ENCODE measurements at regions of chr14 and their contacts with region 1.

Region 1: GRCh38 chr14:70027785-70028428 is 148.7 kb downstream of the SMOC1 start:
- DNase-seq: peak; percentile 85
- CTCF ChIP-seq: peak; percentile 96

Region 2: DNA sequence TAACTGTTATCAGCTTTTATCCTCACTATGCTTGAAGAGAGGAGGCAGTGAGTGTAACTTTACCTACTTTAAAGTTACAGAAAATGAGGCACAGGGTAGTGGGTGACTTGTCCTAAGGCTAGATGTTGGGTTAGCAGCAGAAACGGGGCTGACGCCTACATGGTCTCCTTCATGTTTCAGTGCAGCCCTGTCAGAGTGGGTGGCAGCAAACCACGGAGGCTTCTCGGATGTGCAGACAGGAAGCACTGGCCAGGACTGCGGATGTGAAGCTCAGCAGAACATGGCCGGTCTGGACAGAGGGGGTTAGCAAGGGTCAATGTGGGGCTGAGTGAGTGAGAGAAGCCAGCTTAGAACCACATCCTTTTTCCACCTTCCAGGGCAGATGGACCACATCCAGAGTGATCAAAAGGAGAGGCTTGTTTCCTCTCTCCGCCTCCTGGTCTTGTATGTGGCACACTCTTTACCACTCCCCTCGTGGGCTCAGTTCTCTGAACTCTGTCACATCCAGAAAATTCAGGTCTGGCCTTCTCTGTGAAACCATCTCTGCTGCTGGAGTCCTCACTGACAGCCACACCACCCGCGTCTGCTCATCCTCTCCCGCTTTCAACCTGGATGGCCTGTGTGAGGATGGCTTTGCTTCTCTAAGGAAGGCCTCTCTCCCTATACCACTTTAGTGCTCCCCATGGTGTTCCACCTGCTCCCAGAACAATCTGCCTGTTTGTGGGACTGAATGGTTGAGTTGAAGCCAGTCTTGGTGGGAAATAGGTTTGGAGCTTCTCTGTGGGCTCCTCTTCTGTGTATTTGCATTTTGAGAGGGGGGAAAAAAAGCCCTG is 402.4 kb before region 1 on chr14:
- CTCF ChIA-PET with region 1: no interaction called
- POLR2A ChIA-PET with region 1: no interaction called
- DNase-seq: peak; percentile 70
- CTCF ChIP-seq: no peak

Region 3: GRCh38 chr14:69818757-69819191 is 209.1 kb before region 1 on chr14:
- CTCF ChIA-PET with region 1: interaction called, 136 read pairs
- POLR2A ChIA-PET with region 1: no interaction called
- DNase-seq: peak; percentile 74
- CTCF ChIP-seq: peak; percentile 87

Region 4: DNA sequence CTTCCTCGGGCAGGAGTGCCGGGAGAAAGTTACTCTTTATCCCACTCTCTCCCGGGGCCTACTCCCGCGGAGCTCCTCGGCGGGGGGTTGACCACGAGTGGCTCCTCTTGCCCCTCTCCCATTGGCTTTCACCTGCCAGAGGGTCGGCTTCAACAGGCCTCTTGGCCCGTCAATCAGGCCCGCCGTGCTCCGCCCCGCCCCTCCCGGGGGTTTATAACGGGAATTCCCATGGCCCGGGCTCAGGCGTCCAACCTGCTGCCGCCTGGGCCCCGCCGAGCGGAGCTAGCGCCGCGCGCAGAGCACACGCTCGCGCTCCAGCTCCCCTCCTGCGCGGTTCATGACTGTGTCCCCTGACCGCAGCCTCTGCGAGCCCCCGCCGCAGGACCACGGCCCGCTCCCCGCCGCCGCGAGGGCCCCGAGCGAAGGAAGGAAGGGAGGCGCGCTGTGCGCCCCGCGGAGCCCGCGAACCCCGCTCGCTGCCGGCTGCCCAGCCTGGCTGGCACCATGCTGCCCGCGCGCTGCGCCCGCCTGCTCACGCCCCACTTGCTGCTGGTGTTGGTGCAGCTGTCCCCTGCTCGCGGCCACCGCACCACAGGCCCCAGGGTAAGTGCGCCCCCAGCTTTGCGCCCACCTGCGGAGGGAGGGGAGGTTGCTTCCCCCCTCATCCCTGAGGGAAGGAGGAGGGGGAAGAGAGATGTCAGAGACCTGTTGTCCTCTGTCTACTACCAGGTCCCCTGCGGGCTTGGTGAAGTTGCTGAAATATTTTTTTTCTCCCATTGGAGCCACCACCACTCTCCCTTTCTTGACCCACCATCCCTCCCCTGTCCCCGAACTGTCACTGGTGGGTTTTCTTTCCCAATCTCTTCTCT is 148.5 kb before region 1 on chr14 and contains the start of gene SMOC1:
- CTCF ChIA-PET with region 1: interaction called, 57 read pairs
- POLR2A ChIA-PET with region 1: no interaction called
- DNase-seq: peak; percentile 63
- CTCF ChIP-seq: no peak

Region 5: GRCh38 chr14:70013269-70013873 is 14.5 kb before region 1 on chr14:
- CTCF ChIA-PET with region 1: interaction called, 103 read pairs
- POLR2A ChIA-PET with region 1: no interaction called
- DNase-seq: peak; percentile 54
- CTCF ChIP-seq: peak; percentile 65

Region 6: DNA sequence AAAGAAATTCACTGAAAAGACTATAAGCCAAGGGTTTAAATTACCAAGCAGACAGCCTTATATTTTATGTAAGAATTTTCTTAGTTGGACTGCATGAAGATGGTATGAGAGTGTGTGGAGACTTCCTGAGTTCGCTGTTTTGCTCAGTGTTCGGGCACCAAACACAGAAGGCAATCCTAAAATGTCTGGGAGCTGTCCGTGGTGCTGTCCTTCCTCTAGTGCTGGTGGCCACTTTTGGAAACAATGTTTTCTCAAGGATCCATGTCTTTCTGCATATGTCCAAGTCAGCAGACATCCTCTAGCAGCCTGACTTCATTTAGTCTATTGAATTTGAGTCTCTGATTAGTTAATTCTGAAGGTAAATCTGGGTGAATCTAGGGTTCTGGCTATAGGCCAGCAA is 25.1 kb after region 1 on chr14:
- CTCF ChIA-PET with region 1: interaction called, 15 read pairs
- POLR2A ChIA-PET with region 1: no interaction called
- DNase-seq: no peak
- CTCF ChIP-seq: no peak

Region 7: GRCh38 chr14:70139384-70139783 is 111.5 kb after region 1 on chr14:
- CTCF ChIA-PET with region 1: no interaction called
- POLR2A ChIA-PET with region 1: no interaction called
- DNase-seq: peak; percentile 48
- CTCF ChIP-seq: no peak